Common myeloid progenitor, CD34-positive (primary cell): ENCODE measurements at regions of chr20 and their contacts with region 1.

Region 1: DNA sequence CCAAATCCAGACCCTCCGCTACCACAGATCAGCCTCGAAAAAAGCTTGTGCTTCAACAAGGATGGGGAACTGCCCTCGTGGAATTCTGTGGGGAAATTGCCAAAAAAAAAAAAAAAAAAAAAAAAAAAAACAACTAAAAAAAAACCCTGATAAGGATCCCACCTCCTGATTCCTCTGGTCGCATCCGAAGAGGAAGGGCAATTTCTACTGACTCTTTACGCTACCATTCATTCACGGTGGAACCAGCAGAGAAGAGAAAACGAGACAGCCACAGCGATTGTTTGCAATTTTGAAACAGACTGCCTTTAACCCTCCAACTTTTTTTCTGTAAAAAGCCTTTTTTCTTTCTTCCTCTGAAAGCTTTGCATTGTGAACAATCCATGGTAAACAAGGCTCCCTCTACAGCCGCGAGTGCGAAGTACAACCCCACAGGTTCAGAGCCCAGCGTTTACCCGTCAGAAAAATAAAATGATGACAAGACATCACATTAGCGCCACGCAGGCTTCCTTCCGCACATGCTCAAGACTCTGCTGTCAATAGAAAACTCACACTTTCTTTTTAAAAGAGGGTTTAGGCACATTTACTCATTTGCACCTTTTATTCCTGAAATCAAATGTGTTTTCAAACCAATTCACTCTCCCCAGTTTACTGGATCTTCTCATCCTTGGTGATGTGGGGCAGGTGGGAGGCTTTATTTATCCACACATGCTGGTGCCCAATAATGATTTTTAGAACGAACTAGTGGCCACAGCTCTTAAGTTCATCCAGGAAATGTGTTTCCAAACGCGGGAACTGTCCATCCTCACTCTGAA is 100.0 kb downstream of the NOL4L start:
- DNase-seq: peak; percentile 84 to 93 (median 93)
- H3K4me3 ChIP-seq: peak overlapping the region; percentile 28 to 78 (median 65)
- H3K27ac ChIP-seq: peak overlapping the region in 1 of 2 experiments; percentile 49
- H3K4me1 ChIP-seq: peaks cover 0 to 44% (median 41%) of the 10 kb centered on the region in 4 experiments
- H3K27me3 ChIP-seq: no peaks in the 10 kb centered on the region

Region 2: GRCh38 chr20:31751126-31751525 is 734.0 kb before region 1 on chr20:
- CTCF ChIA-PET with region 1: no interaction called
- POLR2A ChIA-PET with region 1: no interaction called
- DNase-seq: no peak
- H3K4me3 ChIP-seq: no peak overlapping the region
- H3K27ac ChIP-seq: no peak overlapping the region
- H3K4me1 ChIP-seq: peaks cover 0 to 8% (median 4%) of the 10 kb centered on the region in 4 experiments
- H3K27me3 ChIP-seq: no peaks in the 10 kb centered on the region

Region 3: GRCh38 chr20:32470025-32470861 is 14.9 kb before region 1 on chr20:
- CTCF ChIA-PET with region 1: interaction called, 14 read pairs
- POLR2A ChIA-PET with region 1: interaction called, 16 read pairs
- DNase-seq: peak; percentile 52 to 83 (median 70)
- H3K4me3 ChIP-seq: peak overlapping the region in 3 of 7 experiments; percentile 4 to 32 (median 18)
- H3K27ac ChIP-seq: peak overlapping the region; percentile 40 to 74
- H3K4me1 ChIP-seq: peaks cover 0 to 78% (median 75%) of the 10 kb centered on the region in 4 experiments
- H3K27me3 ChIP-seq: no peaks in the 10 kb centered on the region

Region 4: GRCh38 chr20:32497589-32498224 is 12.5 kb after region 1 on chr20:
- CTCF ChIA-PET with region 1: interaction called, 20 read pairs
- POLR2A ChIA-PET with region 1: interaction called, 3 read pairs
- DNase-seq: peak in 2 of 3 donors; percentile 85 to 86
- H3K4me3 ChIP-seq: peak overlapping the region in 3 of 7 experiments; percentile 6 to 42 (median 29)
- H3K27ac ChIP-seq: peak overlapping the region in 1 of 2 experiments; percentile 27
- H3K4me1 ChIP-seq: peaks cover 0 to 24% (median 19%) of the 10 kb centered on the region in 4 experiments
- H3K27me3 ChIP-seq: no peaks in the 10 kb centered on the region

Region 5: GRCh38 chr20:32646486-32646885 is 161.3 kb after region 1 on chr20:
- CTCF ChIA-PET with region 1: no interaction called
- POLR2A ChIA-PET with region 1: no interaction called
- DNase-seq: no peak
- H3K4me3 ChIP-seq: no peak overlapping the region
- H3K27ac ChIP-seq: no peak overlapping the region
- H3K4me1 ChIP-seq: peaks cover 0 to 45% (median 27%) of the 10 kb centered on the region in 4 experiments
- H3K27me3 ChIP-seq: no peaks in the 10 kb centered on the region

Region 6: GRCh38 chr20:32819992-32820710 is 335.0 kb after region 1 on chr20:
- CTCF ChIA-PET with region 1: no interaction called
- POLR2A ChIA-PET with region 1: no interaction called
- DNase-seq: peak; percentile 72 to 89 (median 75)
- H3K4me3 ChIP-seq: peak overlapping the region; percentile 57 to 95 (median 86)
- H3K27ac ChIP-seq: peak overlapping the region; percentile 80 to 87
- H3K4me1 ChIP-seq: peaks cover 3 to 43% (median 20%) of the 10 kb centered on the region in 4 experiments
- H3K27me3 ChIP-seq: no peaks in the 10 kb centered on the region